Colonic mucosa (tissue), 4 donors: ENCODE measurements at regions of chr9 and their contacts with region 1.

Region 1: GRCh38 chr9:90914868-90915483 is 113.4 kb downstream of the SYK start:
- DNase-seq: peak; percentile 71
- H3K4me3 ChIP-seq: no peak overlapping the region
- H3K27ac ChIP-seq: no peak overlapping the region
- H3K4me1 ChIP-seq: no peaks in the 10 kb centered on the region
- H3K27me3 ChIP-seq: no peaks in the 10 kb centered on the region
- CTCF ChIP-seq: peak; percentile 95

Region 2: GRCh38 chr9:91036826-91037510 is 122.0 kb after region 1 on chr9:
- intact Hi-C with region 1: loop called (anchors 10 kb)
- DNase-seq: peak; percentile 85
- H3K4me3 ChIP-seq: no peak overlapping the region
- H3K27ac ChIP-seq: peak overlapping the region; percentile 31
- H3K4me1 ChIP-seq: peaks cover 7% of the 10 kb centered on the region
- H3K27me3 ChIP-seq: no peaks in the 10 kb centered on the region
- CTCF ChIP-seq: peak; percentile 51

Region 3: GRCh38 chr9:91433180-91433579 is 518.2 kb after region 1 on chr9:
- intact Hi-C with region 1: loop called (anchors 2 kb)
- DNase-seq: peak; percentile 39
- H3K4me3 ChIP-seq: no peak overlapping the region
- H3K27ac ChIP-seq: no peak overlapping the region
- H3K4me1 ChIP-seq: no peaks in the 10 kb centered on the region
- H3K27me3 ChIP-seq: no peaks in the 10 kb centered on the region
- CTCF ChIP-seq: peak; percentile 32

Region 4: DNA sequence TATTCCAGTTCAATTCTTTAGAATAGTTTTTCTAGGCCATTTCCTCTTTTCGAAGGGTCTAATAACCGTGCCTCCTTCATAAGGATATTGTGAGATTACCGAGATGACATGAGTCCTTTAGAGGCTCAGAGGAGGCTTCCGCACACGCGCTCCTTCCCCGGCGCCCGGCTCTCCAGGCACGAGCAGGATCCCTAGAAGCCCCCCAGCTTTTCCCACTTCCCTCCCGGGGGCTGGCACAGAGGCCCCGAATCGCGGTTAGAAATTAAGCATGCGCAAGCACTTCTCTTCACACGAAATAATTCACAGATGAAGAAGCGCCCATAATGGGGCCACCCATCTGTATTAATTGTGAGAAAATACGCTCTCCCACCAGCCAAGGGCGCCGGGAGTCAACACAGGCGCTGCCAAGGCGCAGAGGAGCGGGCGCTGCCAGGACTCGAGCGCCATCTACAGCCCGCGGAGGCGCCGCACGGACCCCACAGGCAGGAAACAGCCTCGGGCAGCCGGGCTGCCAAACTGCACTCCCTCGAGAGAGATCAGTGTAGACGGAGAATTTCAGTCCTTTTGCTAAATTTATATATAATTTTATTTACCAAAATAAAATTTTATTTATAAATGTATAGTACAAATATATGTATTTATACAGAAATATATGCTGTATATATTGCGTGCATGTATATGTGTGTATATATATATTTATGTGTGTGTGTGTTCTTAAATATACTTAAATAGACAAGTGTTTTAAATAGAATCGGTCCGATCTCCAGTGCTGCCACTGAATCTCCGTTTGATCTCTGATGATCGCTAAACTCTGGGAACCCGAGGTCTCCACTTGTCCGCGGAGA is 766.7 kb after region 1 on chr9:
- intact Hi-C with region 1: loop called (anchors 5 kb)
- DNase-seq: peak; percentile 64
- H3K4me3 ChIP-seq: no peak overlapping the region
- H3K27ac ChIP-seq: no peak overlapping the region
- H3K4me1 ChIP-seq: no peaks in the 10 kb centered on the region
- H3K27me3 ChIP-seq: no peaks in the 10 kb centered on the region
- CTCF ChIP-seq: peak; percentile 95